ENCODE measurements at regions of chr1 and their contacts with region 1.

Region 1: DNA sequence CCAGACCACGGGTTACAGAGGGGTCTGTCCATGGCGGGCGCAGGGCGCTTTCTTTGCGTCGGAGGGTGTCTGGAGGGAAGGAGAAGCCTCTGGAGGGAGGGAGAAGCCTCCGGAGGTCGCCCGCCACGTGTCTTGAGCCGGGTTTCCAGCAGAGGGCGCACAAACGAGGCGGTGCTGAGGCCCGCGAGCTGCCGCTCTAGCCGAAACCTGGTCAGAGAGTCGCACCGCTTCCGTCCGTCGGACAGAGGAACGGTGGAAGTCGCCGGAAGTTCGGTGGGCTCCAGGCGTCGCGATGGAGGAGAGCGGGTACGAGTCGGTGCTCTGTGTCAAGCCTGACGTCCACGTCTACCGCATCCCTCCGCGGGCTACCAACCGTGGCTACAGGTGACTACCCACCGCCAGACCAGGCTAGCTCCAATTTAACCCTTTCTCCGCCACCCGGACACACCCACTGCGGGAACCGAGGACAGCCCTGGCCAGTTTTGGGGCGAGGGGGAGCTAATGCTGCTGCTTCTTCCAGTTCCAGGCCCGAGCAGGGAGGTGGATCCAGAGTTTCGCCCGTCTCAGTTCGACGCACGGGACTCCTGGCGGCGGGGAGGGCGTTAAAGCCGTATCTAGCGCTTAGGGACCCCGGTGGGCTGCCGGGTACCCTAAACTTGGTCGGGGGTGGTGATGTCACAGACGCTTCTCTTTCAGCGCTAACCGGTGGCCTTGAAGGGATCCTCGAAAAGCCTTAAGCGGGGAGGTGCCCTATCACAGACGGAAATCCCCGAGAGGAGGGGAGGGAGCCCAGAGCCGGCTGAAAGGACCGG is at the start of gene NECAP2:
- DNase-seq: peak; percentile 97
- ATAC-seq: peak; percentile 91
- H3K4me3 Mint-ChIP-seq: peak within 1 kb of the TSS; percentile 81
- H3K27ac Mint-ChIP-seq: peak within 1 kb of the TSS; percentile 96
- H3K4me1 Mint-ChIP-seq: peaks cover 36% of the 10 kb centered on the region
- H3K27me3 Mint-ChIP-seq: no peaks in the 10 kb centered on the region
- total RNA-seq, gene NECAP2: 46.5 to 54.2 TPM

Region 2: GRCh38 chr1:16351994-16352841 is 88.5 kb before region 1 on chr1 and contains the start of gene FBXO42:
- CTCF ChIA-PET with region 1: interaction called, 3 read pairs
- POLR2A ChIA-PET with region 1: no interaction called
- intact Hi-C with region 1: loop called in 1 of 2 experiments (anchors 1 kb)
- DNase-seq: peak; percentile 95
- ATAC-seq: peak; percentile 92
- H3K4me3 Mint-ChIP-seq: peak within 1 kb of the TSS; percentile 96
- H3K27ac Mint-ChIP-seq: peak within 1 kb of the TSS; percentile 96
- H3K4me1 Mint-ChIP-seq: peaks cover 31% of the 10 kb centered on the region
- H3K27me3 Mint-ChIP-seq: no peaks in the 10 kb centered on the region
- total RNA-seq, gene FBXO42: 14.3 to 18.1 TPM

Region 3: GRCh38 chr1:16498573-16499413 is 58.1 kb after region 1 on chr1:
- CTCF ChIA-PET with region 1: no interaction called
- POLR2A ChIA-PET with region 1: no interaction called
- intact Hi-C with region 1: loop called (anchors 1 to 5 kb)
- DNase-seq: peak; percentile 91
- ATAC-seq: peak; percentile 94
- H3K4me3 Mint-ChIP-seq: peak overlapping the region; percentile 74
- H3K27ac Mint-ChIP-seq: no peak overlapping the region
- H3K4me1 Mint-ChIP-seq: peaks cover 10% of the 10 kb centered on the region
- H3K27me3 Mint-ChIP-seq: no peaks in the 10 kb centered on the region

Region 4: DNA sequence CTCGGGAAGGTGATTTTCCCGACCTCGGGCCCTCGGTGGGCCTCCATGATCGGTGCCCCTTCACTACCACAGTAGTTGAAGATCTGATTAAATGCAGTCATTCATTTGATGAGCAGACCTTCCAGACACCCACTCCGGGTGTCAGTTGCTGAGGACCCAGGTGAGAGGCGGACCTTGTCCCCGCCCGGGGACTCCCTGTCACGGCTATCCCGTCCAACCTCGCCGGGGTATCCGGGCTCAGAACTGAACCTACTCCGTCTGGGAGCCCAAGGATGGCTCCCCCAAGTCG is 203.5 kb after region 1 on chr1:
- CTCF ChIA-PET with region 1: no interaction called
- POLR2A ChIA-PET with region 1: no interaction called
- intact Hi-C with region 1: loop called in 1 of 2 experiments (anchors 1 kb)
- DNase-seq: no peak
- ATAC-seq: peak; percentile 47
- H3K4me3 Mint-ChIP-seq: no peak overlapping the region
- H3K27ac Mint-ChIP-seq: no peak overlapping the region
- H3K4me1 Mint-ChIP-seq: peaks cover 3% of the 10 kb centered on the region
- H3K27me3 Mint-ChIP-seq: no peaks in the 10 kb centered on the region

Measured in activated CD4-positive, alpha-beta T cell treated with anti-CD3 and anti-CD28 coated beads for 36 hours (primary cell).